ENCODE measurements at regions of chr6 and their contacts with region 1.

Region 1: DNA sequence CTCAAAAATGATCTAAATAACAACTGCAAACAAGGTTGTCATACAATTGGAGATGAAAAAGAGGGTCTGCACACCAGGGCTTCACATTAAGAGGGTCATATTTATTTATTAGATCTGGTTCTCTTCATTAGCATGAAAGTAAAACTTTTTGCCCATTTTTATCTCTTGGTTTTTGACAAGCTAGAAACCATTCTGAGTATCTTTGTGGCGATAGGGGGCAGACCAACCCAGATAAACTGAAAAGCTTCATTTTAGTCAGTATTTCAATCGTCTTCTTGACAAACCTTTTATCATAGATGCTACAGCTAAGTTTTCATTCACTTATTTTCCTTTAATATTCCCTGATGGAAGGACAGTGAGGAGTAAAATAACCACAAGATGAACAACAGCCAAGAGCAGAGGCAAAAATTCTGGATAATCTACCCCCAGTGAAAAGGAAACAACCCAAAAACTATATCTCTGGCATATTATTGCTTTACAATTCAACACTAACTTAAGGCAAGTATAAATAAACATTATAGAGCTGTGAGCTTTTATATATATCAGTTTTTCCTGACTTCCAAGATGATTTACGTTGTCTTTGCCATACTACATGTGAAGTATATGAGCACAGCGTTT is 45.2 kb downstream of the THEMIS start:
- DNase-seq: peak in 7 of 9 donors; percentile 34 to 66 (median 49)
- ATAC-seq: peak; percentile 64
- H3K4me3 ChIP-seq: no peak overlapping the region
- H3K4me3 Mint-ChIP-seq: peak overlapping the region in 9 of 10 donors; percentile 8 to 70 (median 48)
- H3K27ac ChIP-seq: no peak overlapping the region
- H3K27ac Mint-ChIP-seq: peak overlapping the region; percentile 1 to 85 (median 76)
- H3K4me1 ChIP-seq: peaks cover 43 to 45% of the 10 kb centered on the region in 2 donors
- H3K4me1 Mint-ChIP-seq: peaks cover 43 to 94% (median 87%) of the 10 kb centered on the region in 7 donors
- H3K27me3 ChIP-seq: no peaks in the 10 kb centered on the region
- H3K27me3 Mint-ChIP-seq: no peaks in the 10 kb centered on the region

Region 2: GRCh38 chr6:127737009-127737486 is 118.6 kb before region 1 on chr6:
- CTCF ChIA-PET with region 1: interaction called, 18 read pairs
- POLR2A ChIA-PET with region 1: no interaction called
- intact Hi-C with region 1: loop called (anchors 1 kb)
- DNase-seq: peak in 7 of 9 donors; percentile 47 to 76 (median 68)
- ATAC-seq: peak; percentile 93
- H3K4me3 ChIP-seq: no peak overlapping the region
- H3K4me3 Mint-ChIP-seq: no peak overlapping the region
- H3K27ac ChIP-seq: no peak overlapping the region
- H3K27ac Mint-ChIP-seq: peak overlapping the region; percentile 5 to 89 (median 53)
- H3K4me1 ChIP-seq: peaks cover 0 to 7% of the 10 kb centered on the region in 2 donors
- H3K4me1 Mint-ChIP-seq: peaks cover 24 to 77% (median 63%) of the 10 kb centered on the region in 7 donors
- H3K27me3 ChIP-seq: no peaks in the 10 kb centered on the region
- H3K27me3 Mint-ChIP-seq: no peaks in the 10 kb centered on the region

Region 3: GRCh38 chr6:127918506-127919427 is 63.1 kb after region 1 on chr6:
- CTCF ChIA-PET with region 1: interaction called, 12 read pairs
- POLR2A ChIA-PET with region 1: interaction called, 7 read pairs
- intact Hi-C with region 1: loop called in 1 of 2 experiments (anchors 1 kb)
- DNase-seq: peak in 7 of 9 donors; percentile 68 to 85 (median 80)
- ATAC-seq: peak; percentile 86
- H3K4me3 ChIP-seq: peak overlapping the region; percentile 79
- H3K4me3 Mint-ChIP-seq: peak overlapping the region; percentile 74 to 96 (median 88)
- H3K27ac ChIP-seq: peak overlapping the region; percentile 50
- H3K27ac Mint-ChIP-seq: peak overlapping the region; percentile 83 to 98 (median 93)
- H3K4me1 ChIP-seq: peaks cover 58 to 65% of the 10 kb centered on the region in 2 donors
- H3K4me1 Mint-ChIP-seq: peaks cover 33 to 95% (median 85%) of the 10 kb centered on the region in 7 donors
- H3K27me3 ChIP-seq: no peaks in the 10 kb centered on the region
- H3K27me3 Mint-ChIP-seq: no peaks in the 10 kb centered on the region

Region 4: DNA sequence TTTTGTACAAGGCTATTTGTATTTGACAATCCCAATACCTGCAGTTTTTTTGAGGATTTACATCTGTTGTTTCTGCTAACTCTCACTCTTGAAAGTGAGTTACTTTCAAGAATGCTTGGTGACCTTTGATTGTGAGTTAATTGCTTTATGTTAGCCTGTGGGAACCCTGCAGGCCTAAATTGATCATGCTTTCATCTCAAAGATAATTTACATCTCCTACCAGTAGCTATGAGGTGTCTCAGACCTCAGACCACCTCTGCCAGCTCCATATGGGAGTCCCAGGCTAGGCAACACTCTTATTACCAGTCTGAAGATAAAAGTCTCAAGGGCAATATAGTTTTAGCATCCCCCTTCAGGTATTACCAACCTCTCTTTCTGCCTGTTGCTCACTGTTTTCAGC is 161.6 kb after region 1 on chr6:
- CTCF ChIA-PET with region 1: interaction called, 4 read pairs
- POLR2A ChIA-PET with region 1: no interaction called
- intact Hi-C with region 1: loop called in 1 of 2 experiments (anchors 2 kb)
- DNase-seq: no peak
- ATAC-seq: no peak
- H3K4me3 ChIP-seq: no peak overlapping the region
- H3K4me3 Mint-ChIP-seq: no peak overlapping the region
- H3K27ac ChIP-seq: no peak overlapping the region
- H3K27ac Mint-ChIP-seq: no peak overlapping the region
- H3K4me1 ChIP-seq: no peaks in the 10 kb centered on the region
- H3K4me1 Mint-ChIP-seq: peaks cover 0 to 12% (median 0%) of the 10 kb centered on the region in 7 donors
- H3K27me3 ChIP-seq: no peaks in the 10 kb centered on the region
- H3K27me3 Mint-ChIP-seq: peaks cover 0 to 8% (median 0%) of the 10 kb centered on the region in 5 donors

Region 5: DNA sequence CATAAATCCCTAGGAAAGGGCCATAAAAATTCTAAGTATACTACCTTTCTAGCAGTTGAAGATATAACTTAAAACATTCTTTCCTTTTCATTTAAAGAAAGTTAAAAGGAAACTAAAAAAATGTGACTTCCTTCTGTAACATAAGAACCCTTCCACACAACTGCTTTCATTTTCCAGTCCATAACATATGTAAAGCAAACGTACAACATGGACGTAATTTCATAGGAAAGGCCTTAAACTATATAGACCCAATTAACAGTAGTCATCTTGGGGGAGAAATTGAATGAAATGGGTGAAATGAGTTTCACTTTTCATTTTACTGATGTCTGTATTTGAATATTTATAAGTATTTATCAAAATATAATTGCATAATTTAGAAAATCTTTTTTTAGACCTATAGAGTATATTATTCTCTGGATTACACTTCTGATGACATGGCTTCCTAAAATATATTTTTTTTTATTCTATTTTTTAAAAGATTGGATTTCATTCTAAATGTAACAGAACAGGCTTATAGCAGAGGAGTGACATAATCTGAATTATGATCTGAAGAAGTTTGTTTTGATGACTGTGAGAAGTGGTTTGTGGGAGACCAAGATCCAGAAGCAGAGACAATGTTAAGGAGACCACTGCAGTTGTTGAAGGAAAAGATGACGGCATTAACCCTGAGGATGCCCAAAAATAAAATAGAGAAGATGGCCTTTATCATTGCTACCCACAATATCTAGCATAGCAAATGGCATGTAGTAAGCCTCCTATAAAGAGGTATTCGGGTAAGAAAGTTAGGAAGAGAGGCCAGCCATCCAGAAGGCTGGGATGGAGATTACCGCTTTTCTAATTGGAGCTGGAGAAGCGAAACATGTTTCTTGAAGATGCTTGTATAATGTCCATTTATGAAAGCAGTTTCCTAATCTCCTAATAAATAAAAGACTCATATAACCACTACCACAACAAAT is 404.4 kb after region 1 on chr6:
- CTCF ChIA-PET with region 1: no interaction called
- POLR2A ChIA-PET with region 1: no interaction called
- intact Hi-C with region 1: loop called in 1 of 2 experiments (anchors 5 kb)
- DNase-seq: peak in 7 of 9 donors; percentile 11 to 42 (median 29)
- ATAC-seq: peak; percentile 74
- H3K4me3 ChIP-seq: peak overlapping the region; percentile 30
- H3K4me3 Mint-ChIP-seq: peak overlapping the region; percentile 67 to 91 (median 84)
- H3K27ac ChIP-seq: peak overlapping the region; percentile 45
- H3K27ac Mint-ChIP-seq: peak overlapping the region; percentile 74 to 93 (median 90)
- H3K4me1 ChIP-seq: peaks cover 12 to 15% of the 10 kb centered on the region in 2 donors
- H3K4me1 Mint-ChIP-seq: peaks cover 15 to 46% (median 28%) of the 10 kb centered on the region in 7 donors
- H3K27me3 ChIP-seq: no peaks in the 10 kb centered on the region
- H3K27me3 Mint-ChIP-seq: peaks cover 0 to 3% (median 0%) of the 10 kb centered on the region in 5 donors

Region 6: DNA sequence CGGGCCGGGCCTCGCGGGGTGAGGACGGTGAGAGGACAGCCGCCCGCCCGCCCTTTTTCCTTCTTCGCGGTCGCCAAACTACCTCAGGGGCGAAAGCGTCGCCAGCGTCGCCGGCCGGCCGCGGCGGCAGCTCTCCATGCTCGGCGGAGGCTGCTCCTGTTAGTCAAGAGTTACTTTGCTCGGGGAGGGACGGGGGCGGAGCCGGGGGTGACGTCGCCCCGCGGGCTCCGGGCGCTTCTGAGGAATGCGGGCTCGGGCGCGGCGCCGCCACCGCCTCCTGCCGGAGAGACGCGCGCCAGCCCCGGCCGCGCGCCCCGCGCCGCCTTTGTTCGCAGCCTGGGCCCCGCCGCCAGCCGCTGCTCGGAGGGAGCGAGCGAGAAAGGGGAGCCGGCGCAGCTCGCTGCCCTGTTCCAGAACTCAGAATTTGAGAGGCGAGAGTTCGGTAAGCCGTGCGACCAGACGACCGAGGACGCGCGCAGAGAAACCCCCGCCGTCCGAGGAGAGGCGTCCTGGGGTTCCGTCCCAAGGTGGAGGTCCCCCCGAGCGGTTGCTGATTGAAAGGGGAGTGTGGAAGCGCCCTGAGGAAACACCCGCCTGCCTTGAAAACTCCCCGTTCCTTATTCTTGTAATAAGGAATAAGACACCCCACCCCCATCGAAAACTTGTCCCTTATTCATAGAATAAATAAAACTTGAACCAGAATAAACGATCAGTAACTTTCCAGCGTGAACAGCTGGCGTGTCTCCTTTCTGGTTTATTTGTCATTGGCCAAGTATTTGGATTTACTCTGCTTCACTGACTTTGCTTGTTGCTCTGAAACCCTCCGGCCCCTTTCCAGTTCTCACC is 665.0 kb after region 1 on chr6 and contains the start of gene PTPRK:
- CTCF ChIA-PET with region 1: interaction called, 4 read pairs
- POLR2A ChIA-PET with region 1: interaction called, 4 read pairs
- intact Hi-C with region 1: loop called (anchors 1 kb)
- DNase-seq: peak; percentile 70 to 90 (median 87)
- ATAC-seq: peak; percentile 95
- H3K4me3 ChIP-seq: peak within 1 kb of the TSS; percentile 77
- H3K4me3 Mint-ChIP-seq: peak within 1 kb of the TSS; percentile 90 to 98 (median 94)
- H3K27ac ChIP-seq: peak within 1 kb of the TSS; percentile 59
- H3K27ac Mint-ChIP-seq: peak within 1 kb of the TSS; percentile 73 to 94 (median 82)
- H3K4me1 ChIP-seq: peaks cover 5 to 17% of the 10 kb centered on the region in 2 donors
- H3K4me1 Mint-ChIP-seq: peaks cover 8 to 22% (median 14%) of the 10 kb centered on the region in 7 donors
- H3K27me3 ChIP-seq: no peaks in the 10 kb centered on the region
- H3K27me3 Mint-ChIP-seq: peaks cover 52 to 89% (median 68%) of the 10 kb centered on the region in 5 donors
- total RNA-seq, gene PTPRK: 1.6 to 6.5 (median 3.9) TPM

Region 7: DNA sequence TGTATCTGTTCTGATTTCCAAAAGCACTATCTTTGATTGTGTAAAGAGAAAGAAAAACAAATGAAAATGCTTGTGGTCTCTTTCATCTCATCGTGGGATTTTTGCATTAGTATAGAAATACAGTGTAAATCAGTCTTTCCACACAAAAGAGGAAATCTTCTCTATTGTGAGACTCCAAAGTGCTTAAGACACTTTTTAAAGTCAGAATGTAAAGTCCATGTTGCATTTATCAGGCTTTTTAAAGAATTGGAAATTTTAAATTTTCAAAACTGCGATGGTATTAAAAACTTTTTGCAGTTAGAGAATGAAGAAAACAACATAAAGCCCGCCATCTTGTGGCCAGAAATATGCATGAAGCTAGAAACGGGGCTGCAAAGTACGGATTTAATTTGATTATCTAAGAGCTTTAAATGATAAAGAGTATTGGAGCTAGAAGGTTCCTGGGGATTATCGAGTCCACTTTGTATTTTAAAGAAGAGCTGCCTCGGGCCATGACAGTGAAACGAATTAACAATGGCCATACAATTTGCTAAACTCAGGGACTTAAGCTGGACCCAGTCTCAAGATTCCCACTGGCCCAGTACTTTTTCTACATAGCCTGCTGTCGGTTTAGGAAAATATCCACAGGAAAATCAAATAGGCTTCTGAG is 1514.7 kb after region 1 on chr6:
- CTCF ChIA-PET with region 1: no interaction called
- POLR2A ChIA-PET with region 1: no interaction called
- intact Hi-C with region 1: loop called in 1 of 2 experiments (anchors 10 kb)
- DNase-seq: peak in 7 of 9 donors; percentile 3 to 42 (median 29)
- ATAC-seq: peak; percentile 44
- H3K4me3 ChIP-seq: no peak overlapping the region
- H3K4me3 Mint-ChIP-seq: peak overlapping the region in 6 of 10 donors; percentile 13 to 65 (median 55)
- H3K27ac ChIP-seq: no peak overlapping the region
- H3K27ac Mint-ChIP-seq: no peak overlapping the region
- H3K4me1 ChIP-seq: peaks cover 0 to 5% of the 10 kb centered on the region in 2 donors
- H3K4me1 Mint-ChIP-seq: peaks cover 0 to 17% (median 9%) of the 10 kb centered on the region in 7 donors
- H3K27me3 ChIP-seq: no peaks in the 10 kb centered on the region
- H3K27me3 Mint-ChIP-seq: peaks cover 0 to 2% (median 0%) of the 10 kb centered on the region in 5 donors

Measured in naive thymus-derived CD4-positive, alpha-beta T cell (primary cell).